HepG2 (cell line): ENCODE measurements at regions of chr6 and their contacts with region 1.

Region 1: DNA sequence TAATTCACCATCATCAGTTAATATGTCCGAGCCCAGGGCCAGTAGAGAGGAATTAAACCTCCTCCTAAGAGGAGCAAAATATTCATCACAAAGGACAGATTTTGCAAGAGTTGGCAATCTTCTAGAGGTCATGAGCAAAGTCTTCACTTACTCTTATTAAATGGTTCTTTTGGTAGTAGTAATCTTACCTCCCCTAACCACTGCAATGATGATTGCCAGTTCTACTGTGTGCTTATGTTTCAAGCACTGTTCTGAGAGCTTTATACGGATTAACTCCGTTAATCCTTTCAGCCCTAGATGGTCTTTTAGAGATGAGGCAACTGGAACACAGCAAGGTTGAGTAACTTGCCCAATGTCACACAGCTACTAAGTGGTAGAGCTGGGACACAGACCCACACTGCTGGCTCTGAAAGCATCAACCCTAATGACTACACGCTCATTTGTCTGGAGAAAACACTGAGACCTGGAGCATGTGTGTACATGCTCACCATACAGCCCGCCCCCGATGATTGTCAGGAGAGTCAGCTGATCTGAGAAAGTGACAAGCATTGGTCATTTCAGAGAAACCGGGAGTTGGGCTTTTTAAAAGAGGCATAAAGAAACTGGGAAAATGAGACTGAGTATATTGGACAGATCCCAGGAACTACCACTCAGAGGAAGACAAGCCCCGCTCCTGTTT is 276.0 kb downstream of the NRN1 start:
- DNase-seq: no peak
- ATAC-seq: no peak
- H3K4me3 ChIP-seq: no peak overlapping the region
- H3K27ac ChIP-seq: no peak overlapping the region
- H3K4me1 ChIP-seq: peaks cover 20% of the 10 kb centered on the region
- H3K27me3 ChIP-seq: no peaks in the 10 kb centered on the region
- CTCF ChIP-seq: no peak
- EP300 ChIP-seq: no peak
- POLR2A ChIP-seq: no peak
- RAD21 ChIP-seq: no peak

Region 2: DNA sequence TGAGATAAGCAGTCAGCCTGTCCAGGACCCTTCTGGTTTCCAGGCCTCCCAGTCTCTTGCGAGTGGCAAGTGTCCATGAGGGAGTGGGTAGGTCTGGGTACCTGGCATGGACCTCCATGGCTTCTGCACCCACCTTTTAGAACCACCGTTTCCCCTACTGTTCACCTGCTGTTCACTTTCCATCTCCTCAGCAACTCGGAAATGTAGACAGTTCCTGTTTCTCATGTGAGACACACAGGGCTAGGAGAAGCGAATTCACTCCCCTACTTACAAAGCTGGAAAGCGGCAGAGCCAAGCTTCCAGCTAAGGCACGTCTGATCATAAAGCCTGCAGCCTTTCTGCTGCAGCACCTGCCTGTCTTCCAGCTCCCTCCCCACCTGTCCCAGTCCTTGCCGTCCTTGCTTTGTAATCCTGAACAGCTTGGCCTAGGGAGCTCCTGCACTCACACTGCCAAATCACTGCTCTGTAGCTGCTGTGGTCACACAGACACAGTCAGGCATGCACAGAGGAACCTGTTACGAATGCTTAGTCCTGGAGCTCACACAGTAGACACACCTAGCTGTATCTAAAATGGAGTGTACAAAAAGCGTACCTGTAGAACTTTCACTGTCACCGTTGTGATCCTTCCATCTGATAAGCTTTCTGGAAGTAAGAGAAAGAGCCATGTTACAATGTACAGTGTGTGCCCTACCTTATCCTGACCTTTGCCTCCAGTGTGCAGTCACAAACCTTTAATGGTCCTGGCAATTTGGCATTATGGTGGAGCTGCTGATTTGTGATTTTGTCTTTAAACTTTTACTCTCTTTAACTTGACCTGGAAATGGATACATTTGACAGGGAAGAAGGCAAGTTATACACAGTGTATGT is 18.1 kb before region 1 on chr6:
- CTCF ChIA-PET with region 1: no interaction called
- POLR2A ChIA-PET with region 1: no interaction called
- in situ Hi-C with region 1: no loop called
- intact Hi-C with region 1: loop called (anchors 2 kb)
- DNase-seq: no peak
- ATAC-seq: peak; percentile 61
- H3K4me3 ChIP-seq: no peak overlapping the region
- H3K27ac ChIP-seq: no peak overlapping the region
- H3K4me1 ChIP-seq: peaks cover 25% of the 10 kb centered on the region
- H3K27me3 ChIP-seq: no peaks in the 10 kb centered on the region
- CTCF ChIP-seq: no peak
- EP300 ChIP-seq: no peak
- POLR2A ChIP-seq: no peak
- RAD21 ChIP-seq: no peak